ENCODE measurements at regions of chr5 and their contacts with region 1.

Region 1: DNA sequence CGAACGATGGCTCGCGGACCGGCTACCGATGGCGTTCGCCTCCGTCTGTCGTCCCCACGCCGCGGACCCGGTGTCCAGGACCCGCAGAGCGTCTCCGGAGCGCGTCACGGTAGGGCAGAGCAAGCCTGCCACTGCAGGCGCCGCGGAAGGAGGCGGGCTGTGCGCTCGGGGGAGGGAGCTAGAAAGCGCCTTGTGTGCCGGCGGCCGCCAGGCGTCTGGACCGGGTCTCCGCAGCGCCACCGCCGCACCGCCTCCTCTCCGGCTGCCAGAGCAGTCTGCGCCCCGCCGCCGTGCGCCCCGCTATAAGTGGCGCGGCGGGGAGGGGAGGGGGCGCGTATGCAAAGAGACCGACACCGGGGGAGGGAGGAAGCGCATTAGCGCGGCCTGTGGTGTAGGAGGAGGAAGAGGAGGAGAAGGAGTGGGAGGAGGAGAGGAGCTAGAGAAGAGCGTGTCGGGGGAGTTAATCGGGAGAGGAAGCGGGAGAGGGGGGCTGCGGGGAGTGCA is at the start of gene ENC1:
- DNase-seq: peak; percentile 55 to 67
- ATAC-seq: peak; percentile 79 to 81
- H3K4me3 ChIP-seq: peak within 1 kb of the TSS; percentile 66 to 95 (median 70)
- H3K27ac ChIP-seq: peak within 1 kb of the TSS; percentile 69 to 83 (median 78)
- H3K4me1 ChIP-seq: peaks cover 23 to 28% of the 10 kb centered on the region in 2 donors
- H3K27me3 ChIP-seq: no peaks in the 10 kb centered on the region
- CTCF ChIP-seq: peak; percentile 52 to 78 (median 60)
- POLR2A ChIP-seq: peak; percentile 32 to 54
- total RNA-seq, gene ENC1: 2.2 to 3.4 (median 2.5) TPM

Region 2: GRCh38 chr5:74035521-74035981 is 605.0 kb before region 1 on chr5:
- in situ Hi-C with region 1: loop called in 2 of 4 experiments (anchors 5 to 25 kb)
- intact Hi-C with region 1: loop called (anchors 2 kb)
- DNase-seq: peak in 1 of 2 donors; percentile 18
- ATAC-seq: peak; percentile 61 to 73
- H3K4me3 ChIP-seq: no peak overlapping the region
- H3K27ac ChIP-seq: no peak overlapping the region
- H3K4me1 ChIP-seq: peaks cover 0 to 6% of the 10 kb centered on the region in 2 donors
- H3K27me3 ChIP-seq: no peaks in the 10 kb centered on the region
- CTCF ChIP-seq: peak in 2 of 5 experiments; percentile 43 to 51
- POLR2A ChIP-seq: no peak

Region 3: GRCh38 chr5:74056789-74057164 is 583.7 kb before region 1 on chr5:
- in situ Hi-C with region 1: no loop called
- intact Hi-C with region 1: loop called (anchors 5 kb)
- DNase-seq: no peak
- ATAC-seq: no peak
- H3K4me3 ChIP-seq: no peak overlapping the region
- H3K27ac ChIP-seq: no peak overlapping the region
- H3K4me1 ChIP-seq: no peaks in the 10 kb centered on the region
- H3K27me3 ChIP-seq: no peaks in the 10 kb centered on the region
- CTCF ChIP-seq: peak in 3 of 5 experiments; percentile 7 to 38 (median 36)
- POLR2A ChIP-seq: no peak

Region 4: DNA sequence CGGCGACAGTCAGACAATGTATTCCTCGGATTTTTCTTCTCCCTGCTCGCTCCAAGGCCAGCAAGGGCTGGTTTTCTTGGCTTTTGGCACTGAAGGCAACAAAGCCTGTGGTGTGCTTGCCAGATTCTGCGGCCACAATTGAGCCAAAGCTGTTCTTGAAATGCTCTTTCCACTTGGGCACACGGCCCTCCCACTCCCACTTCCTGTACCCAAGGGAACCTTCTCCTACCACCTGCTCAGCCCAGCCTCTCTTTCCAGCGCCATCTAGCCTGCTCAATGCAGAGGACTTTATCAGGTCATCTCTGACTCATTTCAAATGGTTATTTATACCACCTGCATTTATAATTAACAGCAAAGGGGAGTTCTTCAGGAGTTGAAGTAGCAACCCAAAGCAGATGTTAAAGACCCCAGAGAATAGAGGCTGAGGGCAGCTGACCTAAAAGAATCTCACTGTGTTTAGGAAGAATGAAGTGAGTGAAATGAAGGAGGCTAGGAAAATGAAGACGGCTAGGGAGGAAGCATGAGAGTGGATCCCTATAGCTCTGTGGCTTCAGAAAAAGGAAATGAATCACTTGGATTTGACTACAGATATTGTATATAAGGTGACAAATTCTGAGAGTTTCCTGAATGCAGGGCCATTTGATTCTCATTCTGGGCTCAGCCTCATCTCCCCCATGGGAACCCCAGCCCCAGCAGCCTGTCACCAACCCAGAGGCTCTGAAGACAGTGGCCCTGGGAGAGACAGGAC is 439.0 kb before region 1 on chr5:
- in situ Hi-C with region 1: loop called in 3 of 4 experiments (anchors 25 kb)
- intact Hi-C with region 1: loop called (anchors 10 kb)
- DNase-seq: peak; percentile 18 to 43
- ATAC-seq: peak; percentile 85 to 87
- H3K4me3 ChIP-seq: peak overlapping the region in 1 of 4 donors; percentile 3
- H3K27ac ChIP-seq: peak overlapping the region in 1 of 4 donors; percentile 38
- H3K4me1 ChIP-seq: peaks cover 22 to 28% of the 10 kb centered on the region in 2 donors
- H3K27me3 ChIP-seq: no peaks in the 10 kb centered on the region
- CTCF ChIP-seq: no peak
- POLR2A ChIP-seq: no peak

Region 5: GRCh38 chr5:74294231-74294705 is 346.2 kb before region 1 on chr5:
- in situ Hi-C with region 1: loop called in 1 of 4 experiments (anchors 25 kb)
- intact Hi-C with region 1: loop called (anchors 2 kb)
- DNase-seq: no peak
- ATAC-seq: no peak
- H3K4me3 ChIP-seq: no peak overlapping the region
- H3K27ac ChIP-seq: no peak overlapping the region
- H3K4me1 ChIP-seq: peaks cover 25 to 37% of the 10 kb centered on the region in 2 donors
- H3K27me3 ChIP-seq: no peaks in the 10 kb centered on the region
- CTCF ChIP-seq: no peak
- POLR2A ChIP-seq: no peak

Region 6: GRCh38 chr5:74415695-74416102 is 224.8 kb before region 1 on chr5:
- in situ Hi-C with region 1: loop called in 1 of 4 experiments (anchors 25 kb)
- intact Hi-C with region 1: no loop called
- DNase-seq: no peak
- ATAC-seq: no peak
- H3K4me3 ChIP-seq: no peak overlapping the region
- H3K27ac ChIP-seq: no peak overlapping the region
- H3K4me1 ChIP-seq: peaks cover 13 to 21% of the 10 kb centered on the region in 2 donors
- H3K27me3 ChIP-seq: no peaks in the 10 kb centered on the region
- CTCF ChIP-seq: no peak
- POLR2A ChIP-seq: no peak

Region 7: GRCh38 chr5:74673011-74673790 is 32.7 kb after region 1 on chr5:
- in situ Hi-C with region 1: no loop called
- intact Hi-C with region 1: no loop called
- DNase-seq: no peak
- ATAC-seq: peak; percentile 70 to 79
- H3K4me3 ChIP-seq: peak overlapping the region; percentile 20 to 36 (median 28)
- H3K27ac ChIP-seq: peak overlapping the region in 3 of 4 donors; percentile 16 to 55 (median 21)
- H3K4me1 ChIP-seq: peaks cover 0 to 4% of the 10 kb centered on the region in 2 donors
- H3K27me3 ChIP-seq: no peaks in the 10 kb centered on the region
- CTCF ChIP-seq: peak in 4 of 5 experiments; percentile 22 to 57 (median 40)
- POLR2A ChIP-seq: no peak